B cell (primary cell): ENCODE measurements at regions of chr1 and their contacts with region 1.

Region 1: GRCh38 chr1:206784471-206784903 is 12.2 kb upstream of the IL10 start:
- DNase-seq: peak; percentile 78
- ATAC-seq: peak; percentile 64
- H3K4me3 ChIP-seq: no peak overlapping the region
- H3K4me3 Mint-ChIP-seq: peak overlapping the region; percentile 85
- H3K27ac ChIP-seq: no peak overlapping the region
- H3K27ac Mint-ChIP-seq: peak overlapping the region; percentile 94
- H3K4me1 ChIP-seq: peaks cover 56% of the 10 kb centered on the region in 2 donors
- H3K4me1 Mint-ChIP-seq: peaks cover 61% of the 10 kb centered on the region
- H3K27me3 ChIP-seq: no peaks in the 10 kb centered on the region
- H3K27me3 Mint-ChIP-seq: no peaks in the 10 kb centered on the region
- CTCF ChIP-seq: no peak

Region 2: GRCh38 chr1:206797534-206798383 is 13.3 kb after region 1 on chr1:
- CTCF ChIA-PET with region 1: interaction called, 36 read pairs
- POLR2A ChIA-PET with region 1: interaction called, 4 read pairs
- intact Hi-C with region 1: loop called (anchors 1 kb)
- DNase-seq: peak; percentile 68
- ATAC-seq: peak; percentile 34
- H3K4me3 ChIP-seq: no peak overlapping the region
- H3K4me3 Mint-ChIP-seq: no peak overlapping the region
- H3K27ac ChIP-seq: no peak overlapping the region
- H3K27ac Mint-ChIP-seq: no peak overlapping the region
- H3K4me1 ChIP-seq: peaks cover 23 to 39% of the 10 kb centered on the region in 2 donors
- H3K4me1 Mint-ChIP-seq: peaks cover 63% of the 10 kb centered on the region
- H3K27me3 ChIP-seq: no peaks in the 10 kb centered on the region
- H3K27me3 Mint-ChIP-seq: no peaks in the 10 kb centered on the region
- CTCF ChIP-seq: peak; percentile 66

Region 3: GRCh38 chr1:206803221-206803730 is 18.8 kb after region 1 on chr1:
- CTCF ChIA-PET with region 1: interaction called, 36 read pairs
- POLR2A ChIA-PET with region 1: interaction called, 4 read pairs
- intact Hi-C with region 1: loop called (anchors 1 kb)
- DNase-seq: peak; percentile 70
- ATAC-seq: peak; percentile 90
- H3K4me3 ChIP-seq: no peak overlapping the region
- H3K4me3 Mint-ChIP-seq: peak overlapping the region; percentile 13
- H3K27ac ChIP-seq: no peak overlapping the region
- H3K27ac Mint-ChIP-seq: peak overlapping the region; percentile 87
- H3K4me1 ChIP-seq: peaks cover 4 to 19% of the 10 kb centered on the region in 2 donors
- H3K4me1 Mint-ChIP-seq: peaks cover 35% of the 10 kb centered on the region
- H3K27me3 ChIP-seq: no peaks in the 10 kb centered on the region
- H3K27me3 Mint-ChIP-seq: no peaks in the 10 kb centered on the region
- CTCF ChIP-seq: no peak

Region 4: GRCh38 chr1:207103892-207104373 is 319.4 kb after region 1 on chr1 and contains the start of gene C4BPA:
- CTCF ChIA-PET with region 1: no interaction called
- POLR2A ChIA-PET with region 1: no interaction called
- intact Hi-C with region 1: no loop called
- DNase-seq: no peak
- ATAC-seq: no peak
- H3K4me3 ChIP-seq: no peak within 1 kb of the TSS
- H3K4me3 Mint-ChIP-seq: no peak within 1 kb of the TSS
- H3K27ac ChIP-seq: no peak within 1 kb of the TSS
- H3K27ac Mint-ChIP-seq: no peak within 1 kb of the TSS
- H3K4me1 ChIP-seq: no peaks in the 10 kb centered on the region
- H3K4me1 Mint-ChIP-seq: no peaks in the 10 kb centered on the region
- H3K27me3 ChIP-seq: peaks cover 0 to 7% (median 1%) of the 10 kb centered on the region in 4 experiments
- H3K27me3 Mint-ChIP-seq: peaks cover 47% of the 10 kb centered on the region
- CTCF ChIP-seq: no peak
- total RNA-seq, gene C4BPA: not detected in 2 replicates